ENCODE measurements at regions of chr12 and their contacts with region 1.

Region 1: GRCh38 chr12:55931780-55932550 is 1.0 kb downstream of the DGKA start:
- DNase-seq: peak; percentile 42
- ATAC-seq: no peak
- H3K4me3 Mint-ChIP-seq: peak overlapping the region; percentile 95
- H3K27ac Mint-ChIP-seq: peak overlapping the region; percentile 99
- H3K4me1 Mint-ChIP-seq: peaks cover 53% of the 10 kb centered on the region
- H3K27me3 Mint-ChIP-seq: no peaks in the 10 kb centered on the region

Region 2: DNA sequence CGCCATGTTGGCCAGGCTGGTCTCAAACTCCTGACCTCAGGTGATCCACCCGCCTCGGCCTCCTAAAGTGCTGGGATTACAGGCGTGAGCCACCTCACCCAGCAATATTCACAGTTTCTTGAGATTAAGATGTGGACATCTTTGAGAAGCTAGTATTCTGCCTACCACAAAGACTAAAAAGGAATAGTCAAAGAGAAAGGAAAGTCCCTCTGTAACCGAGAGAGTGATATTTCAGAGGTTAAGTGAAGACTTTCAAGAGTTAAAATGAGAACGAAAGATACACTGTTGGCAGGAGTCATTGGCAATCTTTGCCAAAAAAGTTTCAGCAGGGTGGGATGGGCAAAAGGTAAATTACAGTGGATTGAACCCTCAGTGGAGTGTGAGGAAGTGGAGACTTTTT is 14.6 kb after region 1 on chr12:
- CTCF ChIA-PET with region 1: interaction called, 11 read pairs
- POLR2A ChIA-PET with region 1: interaction called, 139 read pairs
- DNase-seq: no peak
- ATAC-seq: no peak
- H3K4me3 Mint-ChIP-seq: no peak overlapping the region
- H3K27ac Mint-ChIP-seq: no peak overlapping the region
- H3K4me1 Mint-ChIP-seq: peaks cover 12% of the 10 kb centered on the region
- H3K27me3 Mint-ChIP-seq: no peaks in the 10 kb centered on the region

Region 3: DNA sequence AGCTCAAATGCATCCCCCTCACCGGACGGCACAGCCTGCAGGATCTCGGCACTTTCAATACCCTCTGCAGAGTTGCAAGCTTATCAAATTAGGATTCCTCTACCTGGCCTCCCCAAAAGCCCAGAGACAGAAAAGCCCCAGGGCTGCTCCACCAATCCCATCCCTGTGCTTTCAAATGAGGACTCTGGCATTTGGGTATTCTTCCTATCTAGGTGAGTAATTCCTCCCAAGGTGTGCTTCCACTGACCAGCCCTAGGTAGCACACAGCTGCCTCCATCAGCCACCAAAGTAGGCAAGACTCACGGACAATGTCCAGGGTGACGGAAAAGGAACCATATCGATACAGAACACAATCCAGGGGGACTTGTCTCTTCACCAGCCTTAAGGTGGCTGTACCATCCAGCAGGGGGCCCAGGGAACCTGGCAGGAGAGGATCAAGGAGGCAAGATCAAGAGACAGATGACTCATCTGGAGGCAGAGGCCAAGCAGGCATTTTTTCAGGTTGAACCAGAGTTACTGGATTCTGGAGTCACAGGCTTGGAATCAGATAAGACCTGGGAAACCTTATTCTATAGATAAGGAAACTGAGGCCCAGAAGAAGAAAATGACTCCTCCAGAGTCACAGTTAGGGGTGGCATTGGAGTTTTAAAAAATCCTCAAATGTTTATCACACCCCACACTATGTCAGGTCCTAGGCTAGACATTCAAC is 24.0 kb after region 1 on chr12:
- CTCF ChIA-PET with region 1: interaction called, 7 read pairs
- POLR2A ChIA-PET with region 1: interaction called, 16 read pairs
- DNase-seq: peak; percentile 63
- ATAC-seq: peak; percentile 78
- H3K4me3 Mint-ChIP-seq: no peak overlapping the region
- H3K27ac Mint-ChIP-seq: peak overlapping the region; percentile 41
- H3K4me1 Mint-ChIP-seq: peaks cover 2% of the 10 kb centered on the region
- H3K27me3 Mint-ChIP-seq: no peaks in the 10 kb centered on the region

Region 4: DNA sequence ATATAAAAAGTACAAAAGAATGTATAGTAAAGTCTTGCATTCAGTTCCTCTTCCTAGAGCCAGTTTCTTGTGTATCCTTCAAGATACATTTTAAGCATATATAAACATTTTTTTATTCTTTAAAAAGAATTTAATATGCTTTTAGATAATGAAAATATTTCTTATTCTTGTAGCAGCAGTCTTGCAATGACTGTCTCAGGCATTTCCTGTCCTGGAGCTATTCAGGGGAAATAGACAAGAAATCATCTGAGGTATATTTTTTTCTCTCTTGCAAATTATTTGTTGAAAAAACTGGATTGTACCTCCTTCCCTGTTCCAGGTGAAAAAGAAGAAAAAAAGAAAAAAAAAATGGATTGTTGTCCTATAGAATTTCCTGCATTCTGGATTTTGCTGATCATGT is 131.0 kb after region 1 on chr12:
- CTCF ChIA-PET with region 1: no interaction called
- POLR2A ChIA-PET with region 1: no interaction called
- DNase-seq: no peak
- ATAC-seq: no peak
- H3K4me3 Mint-ChIP-seq: no peak overlapping the region
- H3K27ac Mint-ChIP-seq: no peak overlapping the region
- H3K4me1 Mint-ChIP-seq: no peaks in the 10 kb centered on the region
- H3K27me3 Mint-ChIP-seq: peaks cover 7% of the 10 kb centered on the region